ENCODE measurements at regions of chr11 and their contacts with region 1.

Region 1: GRCh38 chr11:77202941-77203900 is 75.2 kb downstream of the MYO7A start:
- DNase-seq: peak in 3 of 7 donors; percentile 11 to 41 (median 16)
- H3K4me3 ChIP-seq: no peak overlapping the region
- H3K27ac ChIP-seq: no peak overlapping the region
- H3K4me1 ChIP-seq: peaks cover 0 to 12% of the 10 kb centered on the region in 2 donors
- H3K27me3 ChIP-seq: no peaks in the 10 kb centered on the region
- CTCF ChIP-seq: no peak
- POLR2A ChIP-seq: no peak

Region 2: GRCh38 chr11:76910620-76911414 is 292.4 kb before region 1 on chr11:
- intact Hi-C with region 1: no loop called
- DNase-seq: peak; percentile 20 to 65 (median 33)
- H3K4me3 ChIP-seq: no peak overlapping the region
- H3K27ac ChIP-seq: peak overlapping the region in 2 of 5 donors; percentile 10 to 11
- H3K4me1 ChIP-seq: peaks cover 0 to 6% of the 10 kb centered on the region in 2 donors
- H3K27me3 ChIP-seq: no peaks in the 10 kb centered on the region
- CTCF ChIP-seq: no peak
- POLR2A ChIP-seq: no peak

Region 3: GRCh38 chr11:77346906-77347603 is 143.8 kb after region 1 on chr11:
- intact Hi-C with region 1: no loop called
- DNase-seq: no peak
- H3K4me3 ChIP-seq: no peak overlapping the region
- H3K27ac ChIP-seq: no peak overlapping the region
- H3K4me1 ChIP-seq: peaks cover 0 to 8% of the 10 kb centered on the region in 2 donors
- H3K27me3 ChIP-seq: no peaks in the 10 kb centered on the region
- CTCF ChIP-seq: no peak
- POLR2A ChIP-seq: no peak

Region 4: GRCh38 chr11:77542296-77542695 is 339.1 kb after region 1 on chr11:
- intact Hi-C with region 1: loop called (anchors 5 to 10 kb)
- DNase-seq: peak in 4 of 7 donors; percentile 34 to 49 (median 42)
- H3K4me3 ChIP-seq: no peak overlapping the region
- H3K27ac ChIP-seq: peak overlapping the region in 2 of 5 donors; percentile 13 to 58
- H3K4me1 ChIP-seq: peaks cover 0 to 6% of the 10 kb centered on the region in 2 donors
- H3K27me3 ChIP-seq: no peaks in the 10 kb centered on the region
- CTCF ChIP-seq: no peak
- POLR2A ChIP-seq: no peak

Region 5: DNA sequence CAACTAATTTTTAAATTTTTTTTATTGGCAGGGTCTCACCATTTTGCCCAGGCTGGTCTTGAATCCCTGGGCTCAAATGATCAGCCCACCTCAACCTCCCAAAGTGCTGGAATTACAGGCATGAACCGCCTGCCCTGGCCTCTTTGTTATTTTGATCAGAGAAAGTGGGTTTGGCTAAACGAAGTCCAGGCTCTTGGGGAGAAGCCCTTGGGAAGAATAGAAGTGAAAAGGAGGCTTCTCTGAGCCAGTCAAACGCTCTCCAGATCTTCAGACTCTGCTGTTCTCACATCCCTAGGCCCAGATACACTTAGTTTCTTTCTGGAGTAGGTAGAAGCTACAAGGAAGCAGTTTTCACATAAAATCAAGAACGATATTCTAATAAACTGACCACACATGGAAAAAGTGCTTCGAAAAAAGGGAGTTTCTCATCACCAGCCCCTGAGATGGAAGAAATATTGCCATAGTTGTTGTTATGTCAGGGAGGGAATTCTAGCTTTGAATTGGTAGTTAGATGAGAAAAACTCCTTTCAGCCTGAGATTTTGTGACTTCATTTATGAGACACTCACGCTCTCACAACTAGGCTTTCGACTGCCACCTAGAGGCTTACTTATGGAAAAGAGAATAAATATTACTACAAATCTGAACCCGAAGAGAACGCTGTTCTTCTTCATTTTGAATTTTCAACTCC is 344.8 kb after region 1 on chr11:
- intact Hi-C with region 1: loop called (anchors 5 to 10 kb)
- DNase-seq: peak; percentile 44 to 68 (median 59)
- H3K4me3 ChIP-seq: no peak overlapping the region
- H3K27ac ChIP-seq: peak overlapping the region in 1 of 5 donors; percentile 24
- H3K4me1 ChIP-seq: peaks cover under 1 to 3% of the 10 kb centered on the region in 2 donors
- H3K27me3 ChIP-seq: no peaks in the 10 kb centered on the region
- CTCF ChIP-seq: peak; percentile 63 to 82 (median 75)
- POLR2A ChIP-seq: no peak

Measured in adrenal gland (tissue), 19 donors.